Caco-2 (cell line): ENCODE measurements at regions of chr7 and their contacts with region 1.

Region 1: DNA sequence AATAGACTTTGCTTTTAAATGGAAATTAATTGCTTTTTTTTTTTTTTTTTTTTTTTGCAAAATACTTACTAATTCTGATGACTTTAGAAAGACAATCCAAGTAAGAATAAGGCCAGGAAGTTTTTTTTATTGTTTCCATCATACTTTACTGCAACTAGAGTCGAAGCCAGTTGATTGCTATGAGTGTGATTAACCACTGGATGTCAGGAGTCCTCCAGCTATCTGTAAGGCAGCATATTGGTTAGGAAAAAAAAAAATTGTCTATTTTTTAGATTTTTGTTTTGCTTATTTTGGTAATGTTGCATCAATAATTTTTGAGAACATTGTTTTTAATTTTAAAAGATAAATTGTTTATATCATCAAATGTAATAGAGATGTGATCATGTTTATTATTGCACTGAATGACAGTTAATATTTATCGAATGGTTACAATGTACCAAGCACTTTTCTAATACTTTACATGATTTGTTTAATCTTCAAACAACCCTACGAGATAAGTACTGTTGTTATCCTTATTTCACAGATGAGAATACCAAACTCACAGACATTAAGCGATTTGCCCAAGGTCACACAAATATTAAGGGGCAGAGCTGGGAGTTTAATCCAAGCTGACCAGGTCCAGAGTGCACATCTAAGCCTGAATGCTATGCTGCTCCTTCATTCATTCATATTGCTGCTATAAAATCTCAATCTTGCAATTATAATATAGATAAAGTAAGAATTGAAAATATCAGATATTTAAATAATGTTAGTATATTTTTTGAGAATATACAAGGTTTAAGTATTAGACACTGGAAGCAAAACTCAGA is 19.9 kb upstream of the LMOD2 start:
- DNase-seq: peak in 1 of 2 experiments; percentile 24
- H3K4me3 ChIP-seq: no peak overlapping the region
- H3K4me3 Mint-ChIP-seq: no peak overlapping the region
- H3K27ac Mint-ChIP-seq: no peak overlapping the region
- H3K4me1 ChIP-seq: peaks cover 11% of the 10 kb centered on the region
- H3K4me1 Mint-ChIP-seq: peaks cover 22% of the 10 kb centered on the region
- H3K27me3 ChIP-seq: no peaks in the 10 kb centered on the region
- H3K27me3 Mint-ChIP-seq: no peaks in the 10 kb centered on the region
- CTCF ChIP-seq: peak; percentile 42 to 69

Region 2: GRCh38 chr7:123494193-123494796 is 141.5 kb before region 1 on chr7:
- CTCF ChIA-PET with region 1: no interaction called
- POLR2A ChIA-PET with region 1: no interaction called
- intact Hi-C with region 1: loop called (anchors 5 kb)
- DNase-seq: peak in 1 of 2 experiments; percentile 30
- H3K4me3 ChIP-seq: no peak overlapping the region
- H3K4me3 Mint-ChIP-seq: no peak overlapping the region
- H3K27ac Mint-ChIP-seq: no peak overlapping the region
- H3K4me1 ChIP-seq: no peaks in the 10 kb centered on the region
- H3K4me1 Mint-ChIP-seq: peaks cover 7% of the 10 kb centered on the region
- H3K27me3 ChIP-seq: no peaks in the 10 kb centered on the region
- H3K27me3 Mint-ChIP-seq: peaks cover 3% of the 10 kb centered on the region
- CTCF ChIP-seq: peak; percentile 50 to 56

Region 3: GRCh38 chr7:123615344-123615743 is 20.4 kb before region 1 on chr7:
- CTCF ChIA-PET with region 1: no interaction called
- POLR2A ChIA-PET with region 1: interaction called, 4 read pairs
- intact Hi-C with region 1: loop called (anchors 1 kb)
- DNase-seq: peak; percentile 60 to 66
- H3K4me3 ChIP-seq: no peak overlapping the region
- H3K4me3 Mint-ChIP-seq: peak overlapping the region; percentile 39
- H3K27ac Mint-ChIP-seq: peak overlapping the region; percentile 63
- H3K4me1 ChIP-seq: peaks cover 48% of the 10 kb centered on the region
- H3K4me1 Mint-ChIP-seq: peaks cover 32% of the 10 kb centered on the region
- H3K27me3 ChIP-seq: no peaks in the 10 kb centered on the region
- H3K27me3 Mint-ChIP-seq: no peaks in the 10 kb centered on the region
- CTCF ChIP-seq: no peak

Region 4: DNA sequence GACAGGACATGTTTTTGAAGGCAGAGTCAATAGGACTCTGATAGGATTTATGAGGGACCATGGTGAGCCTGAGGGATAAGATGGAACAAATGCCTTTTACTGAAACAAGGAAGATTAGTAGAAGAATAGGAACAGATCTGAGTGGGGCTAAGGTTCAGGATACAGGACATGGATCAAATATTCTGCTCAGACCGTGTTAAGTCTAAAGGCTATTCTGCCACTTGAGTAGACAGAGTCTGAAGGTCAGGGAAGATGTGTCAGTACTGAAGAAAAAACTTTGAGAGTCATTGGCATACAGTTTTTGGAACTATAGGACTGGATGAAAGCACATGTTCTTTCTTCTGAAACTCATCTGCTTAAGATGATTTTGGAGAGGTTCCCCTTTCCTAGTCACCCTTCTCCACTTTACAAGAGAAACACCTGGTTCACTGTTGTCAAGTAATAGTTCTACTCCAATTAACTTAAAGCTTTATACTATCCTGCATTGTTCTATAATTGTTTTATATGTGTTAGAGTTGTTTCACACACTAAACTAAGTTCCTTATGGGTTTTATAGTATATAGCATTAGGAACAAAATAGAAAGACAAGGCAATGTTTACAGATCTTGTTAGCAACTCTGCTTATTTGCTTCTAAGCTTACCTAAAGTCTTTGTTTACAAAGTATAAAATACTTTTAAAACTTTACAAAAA is 69.6 kb after region 1 on chr7:
- CTCF ChIA-PET with region 1: interaction called, 10 read pairs
- POLR2A ChIA-PET with region 1: no interaction called
- intact Hi-C with region 1: loop called (anchors 1 kb)
- DNase-seq: no peak
- H3K4me3 ChIP-seq: no peak overlapping the region
- H3K4me3 Mint-ChIP-seq: no peak overlapping the region
- H3K27ac Mint-ChIP-seq: no peak overlapping the region
- H3K4me1 ChIP-seq: peaks cover 14% of the 10 kb centered on the region
- H3K4me1 Mint-ChIP-seq: peaks cover 10% of the 10 kb centered on the region
- H3K27me3 ChIP-seq: no peaks in the 10 kb centered on the region
- H3K27me3 Mint-ChIP-seq: no peaks in the 10 kb centered on the region
- CTCF ChIP-seq: no peak

Region 5: GRCh38 chr7:123865517-123866117 is 229.9 kb after region 1 on chr7:
- CTCF ChIA-PET with region 1: no interaction called
- POLR2A ChIA-PET with region 1: no interaction called
- intact Hi-C with region 1: loop called (anchors 1 kb)
- DNase-seq: peak; percentile 57 to 72
- H3K4me3 ChIP-seq: no peak overlapping the region
- H3K4me3 Mint-ChIP-seq: no peak overlapping the region
- H3K27ac Mint-ChIP-seq: no peak overlapping the region
- H3K4me1 ChIP-seq: 0 out of 2 replicates have a peak, but pooled peaks cover 3% of the 10 kb centered on the region
- H3K4me1 Mint-ChIP-seq: peaks cover 8% of the 10 kb centered on the region
- H3K27me3 ChIP-seq: no peaks in the 10 kb centered on the region
- H3K27me3 Mint-ChIP-seq: no peaks in the 10 kb centered on the region
- CTCF ChIP-seq: peak; percentile 53 to 74

Region 6: DNA sequence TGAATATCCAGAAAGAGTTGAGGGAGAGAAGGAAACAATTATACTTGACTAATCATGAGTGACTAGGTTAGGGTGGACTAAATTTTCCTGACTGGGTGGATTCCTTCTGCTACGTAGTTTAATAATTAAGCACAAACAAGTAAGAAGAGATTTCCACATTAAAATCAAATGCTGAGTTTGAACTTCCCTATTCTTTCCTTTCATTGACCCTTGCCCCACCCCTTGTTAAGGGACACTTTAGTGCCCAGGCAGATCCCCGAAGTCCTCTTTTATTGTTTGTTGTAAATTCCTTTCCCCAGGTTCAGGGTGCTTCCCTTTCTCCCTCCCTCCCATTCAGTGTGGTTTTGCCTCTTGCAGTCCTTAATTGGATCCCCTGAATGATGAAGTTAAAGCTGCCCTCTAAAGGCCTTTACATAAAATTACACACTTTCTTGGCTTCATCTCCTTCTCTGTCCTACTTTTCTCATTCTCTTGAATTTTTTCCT is 280.5 kb after region 1 on chr7:
- CTCF ChIA-PET with region 1: no interaction called
- POLR2A ChIA-PET with region 1: no interaction called
- intact Hi-C with region 1: loop called (anchors 1 kb)
- DNase-seq: peak; percentile 55 to 72
- H3K4me3 ChIP-seq: no peak overlapping the region
- H3K4me3 Mint-ChIP-seq: peak overlapping the region; percentile 20
- H3K27ac Mint-ChIP-seq: peak overlapping the region; percentile 68
- H3K4me1 ChIP-seq: peaks cover 11% of the 10 kb centered on the region
- H3K4me1 Mint-ChIP-seq: peaks cover 14% of the 10 kb centered on the region
- H3K27me3 ChIP-seq: no peaks in the 10 kb centered on the region
- H3K27me3 Mint-ChIP-seq: no peaks in the 10 kb centered on the region
- CTCF ChIP-seq: peak; percentile 50 to 59